IMR-90 (cell line): ENCODE measurements at regions of chr2 and their contacts with region 1.

Region 1: DNA sequence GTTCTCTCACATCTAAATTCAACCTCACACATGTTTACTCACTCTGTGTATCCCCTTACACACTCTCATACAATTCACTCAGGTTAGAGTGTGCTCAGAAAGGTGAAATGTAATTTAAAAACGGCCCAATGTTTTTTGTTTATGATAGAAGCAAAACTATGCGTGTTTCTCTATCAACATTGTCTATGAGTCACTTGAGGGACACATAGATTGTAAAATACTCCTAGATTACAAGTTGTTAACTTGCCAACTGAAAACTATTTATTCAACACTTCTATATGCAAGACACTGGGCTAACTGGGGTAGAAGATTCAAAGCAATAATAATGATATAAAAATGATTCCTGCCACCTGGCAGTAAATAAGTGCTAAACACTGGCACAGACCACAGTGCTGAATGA is 24.6 kb downstream of the CCDC195 start:
- DNase-seq: peak; percentile 11
- ATAC-seq: peak; percentile 21; the same call in 1 of the 2 replicates
- H3K4me3 ChIP-seq: no peak overlapping the region
- H3K27ac ChIP-seq: no peak overlapping the region
- H3K4me1 ChIP-seq: no peaks in the 10 kb centered on the region
- H3K27me3 ChIP-seq: peaks cover 8% of the 10 kb centered on the region; the same call in 1 of the 2 replicates
- CTCF ChIP-seq: no peak
- POLR2A ChIP-seq: no peak
- RAD21 ChIP-seq: no peak

Region 2: DNA sequence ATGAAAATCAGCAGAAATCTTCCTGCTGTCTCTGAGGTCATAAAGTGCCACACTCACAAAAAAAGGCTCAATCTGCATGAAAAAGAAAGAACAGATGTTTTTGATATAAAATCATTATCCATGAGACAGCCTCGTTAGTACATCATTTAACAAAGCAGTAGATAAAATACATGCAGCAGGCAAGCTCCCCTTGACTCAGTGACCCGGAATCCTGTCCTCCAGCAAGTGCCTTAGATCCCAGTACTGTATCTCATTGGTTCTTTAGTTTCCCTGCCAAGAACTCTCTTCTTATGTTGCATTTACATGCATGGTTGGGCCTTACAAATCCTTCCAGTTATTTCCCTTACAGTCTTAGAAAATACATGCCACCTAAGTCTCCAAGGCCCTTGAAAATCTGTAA is 173.5 kb after region 1 on chr2:
- CTCF ChIA-PET with region 1: no interaction called
- POLR2A ChIA-PET with region 1: no interaction called
- dilution Hi-C with region 1: no loop called
- in situ Hi-C with region 1: no loop called
- intact Hi-C with region 1: no loop called
- DNase-seq: no peak
- ATAC-seq: no peak
- H3K4me3 ChIP-seq: no peak overlapping the region
- H3K27ac ChIP-seq: no peak overlapping the region
- H3K4me1 ChIP-seq: no peaks in the 10 kb centered on the region; the same call in 1 of the 2 replicates
- H3K27me3 ChIP-seq: no peaks in the 10 kb centered on the region
- CTCF ChIP-seq: no peak
- POLR2A ChIP-seq: no peak
- RAD21 ChIP-seq: no peak

Region 3: GRCh38 chr2:225052703-225053102 is 361.1 kb after region 1 on chr2:
- CTCF ChIA-PET with region 1: interaction called, 12 read pairs
- POLR2A ChIA-PET with region 1: no interaction called
- dilution Hi-C with region 1: no loop called
- in situ Hi-C with region 1: no loop called
- intact Hi-C with region 1: no loop called
- DNase-seq: peak; percentile 39
- ATAC-seq: peak; percentile 50
- H3K4me3 ChIP-seq: no peak overlapping the region
- H3K27ac ChIP-seq: no peak overlapping the region
- H3K4me1 ChIP-seq: no peaks in the 10 kb centered on the region; the same call in 1 of the 2 replicates
- H3K27me3 ChIP-seq: no peaks in the 10 kb centered on the region
- CTCF ChIP-seq: no peak
- POLR2A ChIP-seq: no peak
- RAD21 ChIP-seq: no peak